Ovary (tissue), 10 donors: ENCODE measurements at regions of chr18 and their contacts with region 1.

Region 1: DNA sequence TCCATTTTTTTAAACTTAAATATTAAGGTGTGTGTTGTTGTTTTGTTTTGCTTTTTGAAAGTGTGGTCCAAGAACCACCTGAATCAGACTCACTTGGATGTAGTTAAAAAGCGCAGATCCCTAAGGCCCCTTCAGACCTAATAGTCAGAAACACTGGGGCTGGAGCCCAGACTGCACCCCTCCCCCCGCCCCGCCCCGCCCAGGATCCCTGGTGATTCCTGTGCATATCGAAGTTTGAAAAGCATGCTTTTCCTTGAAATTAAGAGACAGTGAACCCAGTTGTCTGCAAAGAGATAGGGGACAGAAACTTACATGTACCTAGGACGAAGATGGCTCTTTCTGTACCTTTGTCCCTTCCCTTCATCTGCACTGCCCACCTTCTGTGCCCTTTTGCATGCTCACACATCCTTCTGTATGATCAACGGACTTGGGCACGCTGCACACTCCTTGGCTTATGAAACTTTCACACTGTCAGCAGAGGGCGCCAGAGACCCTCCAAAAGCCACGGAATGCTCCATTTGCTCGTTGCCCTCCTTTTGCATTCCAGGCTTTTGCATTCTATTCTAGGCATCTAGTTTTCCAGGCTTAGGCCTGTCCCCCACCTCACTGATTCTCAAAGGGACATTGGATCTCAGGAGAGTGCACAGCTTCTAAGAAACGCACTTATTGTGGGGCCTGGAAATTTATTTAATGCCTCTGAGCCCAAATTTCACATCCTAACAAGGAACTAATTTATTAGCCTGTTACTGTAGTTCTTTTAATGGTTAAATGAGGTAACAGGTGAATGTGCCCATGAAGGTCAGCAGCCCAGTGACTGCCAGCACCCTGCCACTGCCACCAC is 32.8 kb upstream of the SLC14A1 start:
- DNase-seq: peak; percentile 57 to 80 (median 74)
- H3K4me3 ChIP-seq: no peak overlapping the region
- H3K27ac ChIP-seq: no peak overlapping the region
- H3K4me1 ChIP-seq: no peaks in the 10 kb centered on the region
- H3K27me3 ChIP-seq: no peaks in the 10 kb centered on the region
- CTCF ChIP-seq: peak; percentile 45 to 66 (median 47)
- EP300 ChIP-seq: no peak
- POLR2A ChIP-seq: no peak

Region 2: DNA sequence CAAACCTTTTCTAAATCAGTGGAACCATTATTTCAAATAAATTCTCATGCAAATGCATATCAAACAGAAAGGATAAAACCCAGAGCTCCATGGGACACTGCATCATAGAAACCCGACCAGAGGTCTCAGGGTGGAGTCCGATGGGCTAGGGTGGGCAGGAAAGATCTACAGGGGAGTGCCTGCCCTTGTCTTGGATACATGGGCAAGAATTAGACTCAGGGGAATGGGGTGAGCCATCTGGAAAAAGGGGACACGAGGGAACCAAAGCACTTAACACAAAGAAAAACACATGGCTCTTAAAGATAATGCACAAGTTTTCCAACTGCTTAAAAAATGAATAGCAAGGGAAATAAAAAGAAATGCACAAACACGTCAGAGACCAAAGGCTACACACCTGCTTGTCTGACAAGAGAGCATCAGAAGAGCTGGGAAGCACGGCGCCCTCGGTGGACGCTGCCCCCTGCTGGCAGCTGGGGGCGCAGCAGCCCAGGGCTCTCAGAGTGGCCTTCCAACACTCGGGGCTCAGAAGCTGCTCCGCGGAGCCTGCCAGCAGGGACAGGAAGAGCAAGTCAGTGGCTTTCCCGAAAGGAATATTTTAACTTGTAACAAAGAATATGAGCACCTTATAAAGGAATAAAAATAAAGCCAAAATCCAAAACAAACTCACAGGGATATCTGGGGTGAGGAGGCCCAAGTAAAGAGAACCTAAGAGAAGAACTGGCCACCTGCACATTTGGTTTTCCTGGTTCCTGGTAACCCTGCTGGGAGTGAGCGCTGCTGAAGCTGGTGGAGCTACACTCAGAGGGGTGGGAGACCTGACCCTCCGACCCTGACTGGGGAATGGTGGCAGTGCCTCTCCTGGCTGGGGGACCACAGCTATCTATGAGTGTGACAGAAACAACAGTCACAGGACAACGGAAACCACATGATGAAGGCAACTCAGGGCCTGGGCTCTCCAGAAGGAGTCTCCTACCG is 188.8 kb after region 1 on chr18:
- intact Hi-C with region 1: loop called in 1 of 4 experiments (anchors 10 kb)
- DNase-seq: peak; percentile 30 to 73 (median 52)
- H3K4me3 ChIP-seq: no peak overlapping the region
- H3K27ac ChIP-seq: no peak overlapping the region
- H3K4me1 ChIP-seq: no peaks in the 10 kb centered on the region
- H3K27me3 ChIP-seq: no peaks in the 10 kb centered on the region
- CTCF ChIP-seq: peak; percentile 60 to 68 (median 64)
- EP300 ChIP-seq: no peak
- POLR2A ChIP-seq: no peak

Region 3: DNA sequence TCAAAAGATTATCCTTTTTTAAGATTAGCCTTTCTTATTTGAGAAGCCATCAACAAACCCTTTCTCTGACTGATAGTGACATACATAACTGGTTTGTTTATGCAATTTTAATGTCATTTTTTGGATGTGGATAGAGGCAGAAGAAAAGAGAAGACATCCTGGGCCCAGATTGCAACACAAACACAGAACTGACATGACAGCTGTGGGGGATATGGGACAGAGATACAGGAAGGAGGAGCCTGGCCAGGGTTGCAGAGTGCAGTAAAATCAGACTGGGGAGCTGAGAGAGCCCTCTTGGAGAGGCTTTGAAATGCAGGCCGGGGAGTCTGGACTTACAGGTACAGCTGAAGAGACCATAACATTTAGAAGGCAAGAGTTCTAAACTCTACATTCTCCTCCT is 199.4 kb after region 1 on chr18:
- intact Hi-C with region 1: loop called in 2 of 4 experiments (anchors 10 kb)
- DNase-seq: no peak
- H3K4me3 ChIP-seq: no peak overlapping the region
- H3K27ac ChIP-seq: no peak overlapping the region
- H3K4me1 ChIP-seq: no peaks in the 10 kb centered on the region
- H3K27me3 ChIP-seq: no peaks in the 10 kb centered on the region
- CTCF ChIP-seq: no peak
- EP300 ChIP-seq: no peak
- POLR2A ChIP-seq: no peak

Region 4: GRCh38 chr18:45974088-45974536 is 282.9 kb after region 1 on chr18:
- intact Hi-C with region 1: loop called in 1 of 4 experiments (anchors 5 kb)
- DNase-seq: peak in 4 of 5 donors; percentile 29 to 57 (median 44)
- H3K4me3 ChIP-seq: no peak overlapping the region
- H3K27ac ChIP-seq: no peak overlapping the region
- H3K4me1 ChIP-seq: no peaks in the 10 kb centered on the region
- H3K27me3 ChIP-seq: no peaks in the 10 kb centered on the region
- CTCF ChIP-seq: peak; percentile 44 to 67 (median 55)
- EP300 ChIP-seq: no peak
- POLR2A ChIP-seq: no peak

Region 5: DNA sequence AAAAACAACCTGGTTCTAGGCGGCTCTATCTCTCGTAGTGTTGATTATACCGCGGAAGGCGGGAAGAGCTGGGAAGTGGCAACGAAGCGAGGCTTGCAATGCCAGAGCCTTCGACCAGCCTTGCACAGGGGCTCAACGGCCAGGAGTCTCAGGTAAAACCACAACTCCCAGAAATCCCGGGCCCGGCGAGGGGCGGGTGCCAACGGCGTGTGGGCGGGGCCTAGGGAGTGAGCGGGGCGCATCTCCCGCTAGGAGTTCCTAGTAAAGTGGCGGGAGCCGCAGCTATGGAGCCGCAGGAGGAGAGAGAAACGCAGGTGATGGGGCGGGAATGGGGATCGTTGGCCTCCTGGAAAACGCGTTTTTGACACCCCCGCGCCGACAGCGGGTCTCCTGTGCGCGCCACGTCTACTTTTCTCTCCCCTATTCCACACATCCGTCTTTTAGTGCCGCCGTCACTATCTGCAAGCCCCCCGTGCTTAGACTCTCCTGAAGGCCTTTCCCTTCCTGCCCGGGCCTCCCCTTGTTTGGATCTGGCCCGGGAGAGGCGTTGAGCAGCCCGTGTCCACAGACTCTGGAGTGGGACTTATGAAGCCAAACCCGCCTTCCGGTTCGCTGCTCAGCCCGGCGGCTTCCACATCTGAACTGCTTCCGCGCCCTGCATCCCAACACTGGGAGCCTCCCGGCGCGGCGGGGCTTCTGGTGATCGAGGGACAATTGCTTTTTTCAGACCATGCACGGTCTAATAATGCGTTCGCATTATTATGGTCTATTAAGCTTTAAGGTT is 413.1 kb after region 1 on chr18 and contains the start of gene HAUS1:
- intact Hi-C with region 1: no loop called
- DNase-seq: peak; percentile 90 to 95 (median 93)
- H3K4me3 ChIP-seq: peak within 1 kb of the TSS; percentile 70
- H3K27ac ChIP-seq: peak within 1 kb of the TSS in 1 of 2 donors; percentile 72
- H3K4me1 ChIP-seq: no peaks in the 10 kb centered on the region
- H3K27me3 ChIP-seq: no peaks in the 10 kb centered on the region
- CTCF ChIP-seq: no peak
- EP300 ChIP-seq: no peak
- POLR2A ChIP-seq: peak; percentile 45
- total RNA-seq, gene HAUS1: 20.3 to 54.2 (median 28.1) TPM